Right ventricle myocardium inferior (tissue), 1 donor: ENCODE measurements at regions of chr12 and their contacts with region 1.

Region 1: DNA sequence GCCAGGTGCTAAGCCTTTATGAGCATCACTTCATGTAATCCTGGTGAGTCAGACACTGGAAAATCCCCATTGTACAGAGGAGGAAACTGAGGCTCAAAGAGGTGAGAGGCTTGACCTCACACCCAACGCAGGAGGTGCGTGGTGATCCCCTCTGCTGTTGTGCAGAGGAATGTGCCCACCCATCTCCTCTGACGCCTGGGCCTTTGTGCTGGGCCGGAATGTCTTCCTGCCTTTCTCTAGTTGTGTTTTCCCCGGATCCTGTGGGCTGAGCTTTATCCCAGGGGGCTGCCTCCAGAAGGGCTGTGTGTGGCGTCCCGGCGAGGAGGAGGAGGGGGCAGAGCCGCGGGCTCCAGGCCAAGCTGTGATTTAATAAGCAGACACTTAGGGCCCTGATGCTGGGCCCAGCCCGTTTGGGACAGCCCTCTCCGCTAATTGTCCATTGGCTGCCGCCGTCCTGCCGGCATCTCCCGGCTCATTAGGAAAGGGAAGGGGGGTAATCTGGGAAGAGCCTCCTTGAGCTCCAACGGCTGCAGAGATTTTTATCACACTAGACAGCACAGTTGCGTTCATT is 653.6 kb downstream of the MED13L start:
- DNase-seq: peak; percentile 75
- ATAC-seq: peak; percentile 67

Region 2: DNA sequence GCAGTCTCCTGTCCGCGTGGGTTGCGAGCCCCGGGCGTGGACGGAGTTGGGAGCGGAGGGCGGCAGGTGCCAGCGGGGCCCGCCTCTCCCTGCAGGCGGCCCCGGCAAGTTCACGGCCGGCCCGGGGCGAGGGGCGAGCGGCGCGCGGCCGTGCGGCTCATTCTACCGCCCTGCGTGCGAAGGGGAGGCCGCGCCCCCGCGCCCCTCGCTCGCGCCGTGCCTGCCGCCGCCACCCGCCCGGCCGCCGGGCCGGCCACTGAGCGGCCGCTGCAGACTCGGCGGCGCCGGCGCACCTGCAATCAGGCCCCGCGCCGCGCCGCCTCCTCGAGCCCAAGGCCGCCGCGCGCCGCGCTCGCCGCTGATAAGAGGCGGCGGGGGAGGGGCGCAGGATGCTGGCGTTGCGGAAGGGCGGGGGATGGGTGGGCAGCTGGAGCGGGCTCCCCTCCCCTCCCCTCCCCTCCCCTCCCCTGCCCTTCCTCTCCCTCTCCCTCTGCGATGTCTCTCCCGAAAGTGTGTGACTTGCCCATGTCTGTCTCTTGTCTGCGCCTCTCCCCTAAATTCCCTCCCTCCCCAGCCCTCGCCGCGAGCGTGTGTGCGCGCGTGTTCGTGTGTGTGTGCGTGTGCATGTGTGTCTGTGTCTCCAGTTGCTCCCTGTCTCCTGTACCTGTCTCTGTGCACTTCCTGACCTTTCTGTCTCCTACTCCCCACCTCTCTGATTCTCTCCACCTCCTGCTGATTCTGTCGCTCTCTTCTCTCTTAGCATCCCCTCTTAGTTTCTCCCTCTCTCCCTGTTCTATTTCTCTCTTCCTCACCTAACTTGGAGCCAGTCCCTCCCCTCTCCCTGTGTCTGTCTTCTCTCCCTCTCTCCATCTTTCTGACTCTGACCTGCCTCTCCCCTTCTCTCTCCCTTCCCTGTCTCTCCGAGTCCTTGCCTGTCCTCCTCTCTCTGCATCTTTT is 171.8 kb before region 1 on chr12:
- intact Hi-C with region 1: loop called (anchors 2 kb)
- DNase-seq: peak; percentile 74
- ATAC-seq: peak; percentile 16

Region 3: GRCh38 chr12:115660211-115660805 is 36.5 kb after region 1 on chr12:
- intact Hi-C with region 1: no loop called
- DNase-seq: no peak
- ATAC-seq: peak; percentile 50